ENCODE measurements at regions of chr6 and their contacts with region 1.

Region 1: DNA sequence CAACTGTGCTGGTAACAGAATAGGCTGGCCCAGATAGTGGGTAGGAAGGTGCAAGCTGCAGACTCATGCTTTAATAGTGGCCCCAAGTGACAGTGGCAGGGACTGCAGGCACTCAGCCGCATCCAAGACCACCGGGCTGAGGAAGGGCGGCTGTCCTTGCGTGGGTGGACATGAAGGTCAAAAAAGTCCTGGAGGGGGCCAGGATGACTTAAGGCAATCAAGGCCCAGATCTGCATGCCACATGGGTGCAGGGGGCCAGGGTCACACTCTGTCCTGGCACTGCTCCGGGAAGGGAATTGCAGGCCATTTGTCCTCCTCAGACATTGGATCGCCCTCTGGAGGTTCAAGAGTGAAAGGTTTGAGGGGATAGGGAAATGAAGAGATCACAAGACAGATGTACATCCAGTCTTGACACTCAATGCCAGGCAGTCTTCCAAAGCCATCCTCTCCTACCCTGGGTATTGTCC is 10.4 kb upstream of the VNN2 start:
- DNase-seq: no peak
- H3K4me3 Mint-ChIP-seq: no peak overlapping the region
- H3K27ac Mint-ChIP-seq: no peak overlapping the region
- H3K4me1 Mint-ChIP-seq: peaks cover 16% of the 10 kb centered on the region
- H3K27me3 Mint-ChIP-seq: no peaks in the 10 kb centered on the region

Region 2: DNA sequence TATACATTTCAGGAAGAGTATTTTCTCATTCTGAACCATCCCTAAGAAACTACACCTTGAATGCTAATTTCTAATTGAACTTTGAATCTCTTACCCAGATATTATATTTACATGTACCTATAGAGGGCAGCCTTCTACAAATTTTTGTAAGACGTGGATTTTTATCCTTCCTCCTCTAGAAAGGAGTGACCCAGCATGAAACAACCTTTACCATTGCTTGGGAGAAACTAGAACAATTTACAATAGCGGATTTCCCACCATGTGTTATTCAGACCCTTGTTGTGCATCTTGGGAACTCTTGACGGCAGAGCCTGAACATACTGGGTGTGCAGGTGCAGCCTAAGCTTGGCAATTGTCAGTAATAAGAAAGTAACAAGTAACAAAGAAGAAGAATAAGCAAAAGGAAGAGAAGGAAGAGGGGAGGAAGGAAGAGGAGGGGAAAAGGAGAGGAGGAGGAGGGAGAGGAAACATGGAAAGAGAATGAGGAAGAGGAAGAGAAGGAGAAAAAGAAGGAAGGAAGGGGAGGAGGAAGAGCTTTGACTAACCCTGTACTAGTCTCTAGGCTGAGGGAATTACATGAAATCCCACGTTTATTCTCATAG is 98.3 kb before region 1 on chr6:
- intact Hi-C with region 1: loop called (anchors 1 kb)
- DNase-seq: no peak
- H3K4me3 Mint-ChIP-seq: no peak overlapping the region
- H3K27ac Mint-ChIP-seq: no peak overlapping the region
- H3K4me1 Mint-ChIP-seq: peaks cover 7% of the 10 kb centered on the region
- H3K27me3 Mint-ChIP-seq: peaks cover 5% of the 10 kb centered on the region

Region 3: GRCh38 chr6:132736239-132736638 is 31.8 kb before region 1 on chr6:
- intact Hi-C with region 1: loop called (anchors 1 kb)
- DNase-seq: no peak
- H3K4me3 Mint-ChIP-seq: no peak overlapping the region
- H3K27ac Mint-ChIP-seq: no peak overlapping the region
- H3K4me1 Mint-ChIP-seq: peaks cover 25% of the 10 kb centered on the region
- H3K27me3 Mint-ChIP-seq: peaks cover 14% of the 10 kb centered on the region